CD14-positive monocyte (primary cell): ENCODE measurements at regions of chrX and their contacts with region 1.

Region 1: DNA sequence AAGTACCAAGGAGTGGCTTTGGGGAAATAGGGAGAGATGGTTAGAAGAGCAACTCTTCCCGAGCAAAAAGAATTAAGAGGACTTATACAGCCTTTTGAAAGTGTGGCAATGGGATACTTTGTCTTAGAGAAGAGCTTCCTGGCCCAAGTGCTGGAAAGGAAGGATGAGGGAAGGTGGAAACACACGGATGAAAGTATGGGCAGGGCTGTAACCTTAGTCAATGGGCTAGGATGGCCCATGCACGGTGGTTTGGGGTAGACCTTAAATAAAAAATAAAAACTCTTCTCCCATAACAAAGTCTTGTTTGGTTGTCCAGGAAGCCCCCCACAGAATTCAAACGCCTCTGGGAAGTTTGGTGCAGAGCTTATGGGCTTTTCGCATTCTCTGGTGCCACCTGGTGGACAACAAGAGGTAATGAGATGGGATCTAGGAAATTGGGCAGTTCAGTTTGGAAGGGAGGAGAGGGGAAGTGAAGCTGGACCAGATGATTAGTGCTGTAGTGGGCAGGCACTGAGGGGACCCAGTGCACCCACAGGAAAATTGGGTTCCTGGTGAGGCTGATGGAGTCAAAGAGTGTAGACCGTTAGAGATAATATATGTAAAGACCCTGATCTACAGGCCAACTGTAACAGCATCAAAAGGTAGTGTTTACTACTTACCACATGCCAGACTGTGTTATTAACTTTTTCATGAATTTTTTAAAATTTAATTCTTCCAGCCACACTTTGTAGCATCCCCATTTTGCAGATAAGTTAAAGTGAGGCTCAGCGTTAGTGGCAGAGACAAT is 13.8 kb upstream of the ENOX2 start:
- DNase-seq: peak; percentile 43 to 63 (median 46)
- H3K4me3 ChIP-seq: no peak overlapping the region
- H3K4me3 Mint-ChIP-seq: no peak overlapping the region
- H3K27ac ChIP-seq: no peak overlapping the region
- H3K27ac Mint-ChIP-seq: no peak overlapping the region
- H3K4me1 ChIP-seq: peaks cover 0 to 4% of the 10 kb centered on the region in 2 donors
- H3K4me1 Mint-ChIP-seq: peaks cover 5% of the 10 kb centered on the region
- H3K27me3 ChIP-seq: no peaks in the 10 kb centered on the region
- H3K27me3 Mint-ChIP-seq: peaks cover 2 to 8% (median 2%) of the 10 kb centered on the region in 3 donors
- CTCF ChIP-seq: peak; percentile 62

Region 2: GRCh38 chrX:130393451-130394074 is 523.3 kb before region 1 on chrX:
- intact Hi-C with region 1: loop called in 1 of 2 experiments (anchors 10 kb)
- DNase-seq: peak in 2 of 3 donors; percentile 3 to 6
- H3K4me3 ChIP-seq: no peak overlapping the region
- H3K4me3 Mint-ChIP-seq: no peak overlapping the region
- H3K27ac ChIP-seq: no peak overlapping the region
- H3K27ac Mint-ChIP-seq: no peak overlapping the region
- H3K4me1 ChIP-seq: no peaks in the 10 kb centered on the region
- H3K4me1 Mint-ChIP-seq: no peaks in the 10 kb centered on the region
- H3K27me3 ChIP-seq: peaks cover 4 to 17% of the 10 kb centered on the region in 2 donors
- H3K27me3 Mint-ChIP-seq: peaks cover 3 to 11% (median 6%) of the 10 kb centered on the region in 3 donors
- CTCF ChIP-seq: peak; percentile 31

Region 3: GRCh38 chrX:130539721-130540321 is 377.0 kb before region 1 on chrX:
- intact Hi-C with region 1: loop called in 1 of 2 experiments (anchors 5 kb)
- DNase-seq: peak; percentile 2 to 15 (median 4)
- H3K4me3 ChIP-seq: no peak overlapping the region
- H3K4me3 Mint-ChIP-seq: no peak overlapping the region
- H3K27ac ChIP-seq: no peak overlapping the region
- H3K27ac Mint-ChIP-seq: no peak overlapping the region
- H3K4me1 ChIP-seq: no peaks in the 10 kb centered on the region
- H3K4me1 Mint-ChIP-seq: no peaks in the 10 kb centered on the region
- H3K27me3 ChIP-seq: no peaks in the 10 kb centered on the region
- H3K27me3 Mint-ChIP-seq: peaks cover 0 to 2% (median 0%) of the 10 kb centered on the region in 3 donors
- CTCF ChIP-seq: peak; percentile 71